Activated T-helper 1 cell treated with anti-CD3 and anti-CD28 coated beads, Interleukin-12 subunit alpha, Interleukin-12 subunit beta, Interleukin-2, Interleukin-4 antibody, amounts not matched to agents 30 ng/mL and 10 ng/mL and 1 ng/mL, durations not matched to agents 14 hours and 24 hours and 36 hours (primary cell): ENCODE measurements at regions of chr4 and their contacts with region 1.

Region 1: GRCh38 chr4:155353923-155354540 is 22.7 kb downstream of the MAP9 start:
- DNase-seq: no peak
- H3K4me3 Mint-ChIP-seq: no peak overlapping the region
- H3K27ac Mint-ChIP-seq: no peak overlapping the region
- H3K4me1 Mint-ChIP-seq: no peaks in the 10 kb centered on the region
- H3K27me3 Mint-ChIP-seq: no peaks in the 10 kb centered on the region

Region 2: GRCh38 chr4:154982187-154983047 is 371.6 kb before region 1 on chr4:
- intact Hi-C with region 1: loop called (anchors 1 kb)
- DNase-seq: peak; percentile 2
- H3K4me3 Mint-ChIP-seq: no peak overlapping the region
- H3K27ac Mint-ChIP-seq: no peak overlapping the region
- H3K4me1 Mint-ChIP-seq: no peaks in the 10 kb centered on the region
- H3K27me3 Mint-ChIP-seq: peaks cover 4% of the 10 kb centered on the region

Region 3: GRCh38 chr4:155299103-155299502 is 54.9 kb before region 1 on chr4:
- intact Hi-C with region 1: no loop called
- DNase-seq: no peak
- H3K4me3 Mint-ChIP-seq: no peak overlapping the region
- H3K27ac Mint-ChIP-seq: no peak overlapping the region
- H3K4me1 Mint-ChIP-seq: no peaks in the 10 kb centered on the region
- H3K27me3 Mint-ChIP-seq: no peaks in the 10 kb centered on the region